Mammary epithelial cell (primary cell): ENCODE measurements at regions of chr15 and their contacts with region 1.

Region 1: GRCh38 chr15:98413933-98414546 is 234.3 kb upstream of the IGF1R start:
- DNase-seq: no peak
- H3K4me3 ChIP-seq: no peak overlapping the region
- H3K27ac ChIP-seq: no peak overlapping the region
- H3K4me1 ChIP-seq: no peaks in the 10 kb centered on the region
- H3K27me3 ChIP-seq: no peaks in the 10 kb centered on the region
- CTCF ChIP-seq: no peak

Region 2: DNA sequence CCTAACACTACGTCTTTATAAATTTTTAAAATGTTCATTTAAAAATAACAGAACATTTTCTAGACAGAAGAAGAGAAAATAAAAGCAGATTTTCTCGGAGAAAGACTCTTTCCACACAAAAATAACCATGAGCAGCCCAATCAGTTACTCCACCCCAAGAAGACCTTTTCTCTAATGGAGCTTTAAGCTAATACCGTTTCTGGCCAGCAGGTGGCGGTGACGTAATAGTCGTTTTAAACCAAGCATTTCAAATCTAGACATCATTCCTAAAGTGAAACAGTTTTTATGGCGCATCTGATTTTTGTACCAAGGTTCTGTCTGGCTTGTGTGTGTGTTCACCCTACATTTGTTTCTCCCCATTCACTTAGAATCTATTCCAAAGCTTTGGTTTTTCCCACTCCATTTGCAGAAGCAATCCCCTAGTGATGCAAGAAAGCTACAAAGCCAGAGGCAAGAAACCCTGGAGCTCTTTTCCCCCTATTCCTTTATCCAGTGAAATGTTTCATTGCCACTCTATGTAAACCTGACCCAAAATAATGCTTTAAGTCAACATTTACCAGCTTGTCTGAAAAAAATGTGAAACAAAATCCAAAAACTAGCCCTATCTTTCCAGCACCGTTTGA is 102.4 kb before region 1 on chr15:
- CTCF ChIA-PET with region 1: interaction called, 8 read pairs
- dilution Hi-C with region 1: loop called (anchors 10 kb)
- in situ Hi-C with region 1: no loop called
- intact Hi-C with region 1: no loop called
- DNase-seq: peak; percentile 62
- H3K4me3 ChIP-seq: no peak overlapping the region
- H3K27ac ChIP-seq: no peak overlapping the region
- H3K4me1 ChIP-seq: no peaks in the 10 kb centered on the region
- H3K27me3 ChIP-seq: no peaks in the 10 kb centered on the region
- CTCF ChIP-seq: peak; percentile 77 to 84